MCF 10A (cell line): ENCODE measurements at regions of chr1 and their contacts with region 1.

Region 1: DNA sequence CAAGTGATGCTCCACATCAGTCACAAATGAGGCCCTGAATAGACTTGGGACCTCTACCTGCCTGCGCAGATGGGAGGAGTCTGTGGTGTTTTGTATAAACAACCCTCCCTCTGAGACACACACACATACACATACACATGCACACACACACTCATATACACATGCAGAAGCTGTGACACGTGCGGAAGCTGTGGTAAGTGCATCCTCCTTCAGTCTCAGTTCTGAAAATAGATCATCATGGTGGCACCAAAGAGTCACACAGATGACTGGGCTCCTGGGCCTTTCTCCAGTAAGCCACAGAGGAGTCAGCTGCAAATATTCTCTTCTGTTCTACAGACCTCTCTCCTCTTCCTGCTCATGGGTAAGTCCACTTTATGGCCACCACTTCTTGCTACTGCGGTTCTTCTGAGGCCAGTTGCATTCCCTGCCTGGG is at the start of gene LY9:
- DNase-seq: no peak
- H3K4me3 Mint-ChIP-seq: no peak within 1 kb of the TSS
- H3K27ac Mint-ChIP-seq: no peak within 1 kb of the TSS
- H3K4me1 Mint-ChIP-seq: peaks cover 7% of the 10 kb centered on the region
- H3K27me3 Mint-ChIP-seq: no peaks in the 10 kb centered on the region
- CTCF ChIP-seq: no peak
- total RNA-seq, gene LY9: not detected in 2 replicates

Region 2: DNA sequence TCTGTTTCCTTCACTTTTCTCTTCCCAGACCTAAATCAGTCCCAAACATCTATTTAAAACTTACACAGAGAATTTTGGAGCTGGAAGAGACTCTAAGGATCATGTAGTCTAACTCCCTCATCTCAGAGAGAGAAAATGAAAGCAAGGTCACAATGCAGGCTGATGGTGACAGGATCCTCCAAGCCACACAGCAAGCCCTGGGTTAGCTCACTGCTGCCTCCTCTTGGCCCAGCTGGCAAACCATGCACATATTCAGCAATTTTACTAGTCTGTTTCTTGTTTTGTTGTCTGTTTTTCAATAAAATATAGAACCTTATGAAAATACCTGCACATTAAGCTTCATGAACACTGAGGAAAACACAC is 27.7 kb before region 1 on chr1:
- CTCF ChIA-PET with region 1: interaction called, 14 read pairs
- POLR2A ChIA-PET with region 1: interaction called, 6 read pairs
- intact Hi-C with region 1: no loop called
- DNase-seq: peak; percentile 60
- H3K4me3 Mint-ChIP-seq: peak overlapping the region; percentile 56
- H3K27ac Mint-ChIP-seq: peak overlapping the region; percentile 75
- H3K4me1 Mint-ChIP-seq: peaks cover 17% of the 10 kb centered on the region
- H3K27me3 Mint-ChIP-seq: no peaks in the 10 kb centered on the region
- CTCF ChIP-seq: peak; percentile 70

Region 3: DNA sequence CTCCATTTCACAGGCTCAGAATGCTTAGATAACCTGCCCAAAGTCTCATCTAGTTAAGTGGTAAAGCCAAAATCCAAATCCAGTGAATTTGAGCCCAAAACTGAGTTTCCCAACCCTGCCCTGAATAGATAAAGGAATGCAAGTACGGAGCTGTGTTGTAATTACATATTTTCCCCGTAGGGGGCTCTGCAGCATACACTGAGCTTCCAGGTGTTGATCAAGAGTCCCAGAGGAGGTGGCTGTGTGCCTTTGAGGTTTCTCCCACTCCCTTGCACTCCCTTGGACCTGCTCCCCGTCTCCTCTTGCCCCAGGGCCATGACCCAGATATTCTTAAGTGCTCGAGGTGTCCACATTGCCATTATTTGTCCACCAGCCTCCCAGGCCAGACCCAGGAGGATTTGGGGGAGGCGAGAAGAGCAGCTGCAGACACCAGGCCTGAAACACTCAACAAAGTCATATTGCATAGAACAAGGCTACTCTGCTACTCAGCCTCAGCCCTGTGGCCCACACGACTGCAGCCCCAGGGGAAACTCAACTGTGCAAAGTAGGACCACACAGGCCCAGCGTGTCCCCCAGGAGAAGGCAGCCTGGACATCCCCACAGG is 18.4 kb before region 1 on chr1:
- CTCF ChIA-PET with region 1: interaction called, 21 read pairs
- POLR2A ChIA-PET with region 1: no interaction called
- intact Hi-C with region 1: no loop called
- DNase-seq: peak; percentile 71
- H3K4me3 Mint-ChIP-seq: no peak overlapping the region
- H3K27ac Mint-ChIP-seq: no peak overlapping the region
- H3K4me1 Mint-ChIP-seq: no peaks in the 10 kb centered on the region
- H3K27me3 Mint-ChIP-seq: no peaks in the 10 kb centered on the region
- CTCF ChIP-seq: peak; percentile 85

Region 4: GRCh38 chr1:161201828-161202725 is 406.1 kb after region 1 on chr1 and contains the start of gene NDUFS2:
- CTCF ChIA-PET with region 1: no interaction called
- POLR2A ChIA-PET with region 1: no interaction called
- intact Hi-C with region 1: no loop called
- DNase-seq: peak; percentile 100
- H3K4me3 Mint-ChIP-seq: peak within 1 kb of the TSS; percentile 85
- H3K27ac Mint-ChIP-seq: peak within 1 kb of the TSS; percentile 96
- H3K4me1 Mint-ChIP-seq: peaks cover 66% of the 10 kb centered on the region
- H3K27me3 Mint-ChIP-seq: no peaks in the 10 kb centered on the region
- CTCF ChIP-seq: no peak
- total RNA-seq, gene NDUFS2: 139 and 149 TPM in 2 replicates